WTC11 (cell line): ENCODE measurements at regions of chr5 and their contacts with region 1.

Region 1: DNA sequence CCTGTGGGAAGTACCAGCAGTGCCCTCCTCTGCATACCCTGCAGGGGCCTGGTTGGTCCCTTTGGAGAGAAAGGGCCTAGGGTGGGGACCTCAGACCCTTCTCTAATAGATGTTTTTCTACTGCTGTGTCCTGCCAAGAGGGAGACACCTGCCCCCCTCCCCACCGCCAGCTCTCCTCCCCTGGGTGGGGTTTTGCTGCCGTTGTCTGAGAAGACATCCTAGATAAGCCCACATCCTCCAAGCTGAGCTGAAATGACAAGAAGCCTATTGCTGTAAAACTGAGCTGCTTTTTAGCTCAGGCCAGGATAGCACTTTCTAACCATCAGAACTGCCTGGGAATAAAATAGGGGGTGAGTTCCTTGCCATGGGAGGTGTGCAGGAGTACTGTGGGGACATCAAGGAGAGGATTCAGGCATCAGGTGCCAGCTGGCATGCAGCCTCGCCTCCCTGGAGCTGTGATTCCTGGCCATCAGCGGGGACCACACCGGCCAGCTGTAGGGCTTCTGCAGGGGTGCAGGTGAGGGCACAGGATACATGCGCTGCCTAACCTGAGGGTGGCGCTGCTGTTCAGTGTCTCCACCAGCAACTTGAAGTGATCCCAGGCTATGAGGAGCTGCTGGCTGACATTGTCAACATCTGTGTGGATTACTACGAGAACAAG is 37.9 kb downstream of the CYFIP2 start:
- DNase-seq: peak; percentile 85
- ATAC-seq: peak; percentile 99
- H3K4me3 Mint-ChIP-seq: no peak overlapping the region
- H3K27ac Mint-ChIP-seq: no peak overlapping the region
- H3K4me1 Mint-ChIP-seq: no peaks in the 10 kb centered on the region
- H3K27me3 Mint-ChIP-seq: no peaks in the 10 kb centered on the region
- CTCF ChIP-seq: peak; percentile 65

Region 2: GRCh38 chr5:157253547-157253946 is 50.2 kb before region 1 on chr5:
- CTCF ChIA-PET with region 1: interaction called, 26 read pairs
- POLR2A ChIA-PET with region 1: interaction called, 3 read pairs
- DNase-seq: peak; percentile 71
- ATAC-seq: peak; percentile 97
- H3K4me3 Mint-ChIP-seq: no peak overlapping the region
- H3K27ac Mint-ChIP-seq: no peak overlapping the region
- H3K4me1 Mint-ChIP-seq: peaks cover 4% of the 10 kb centered on the region; the same call in 1 of the 2 replicates
- H3K27me3 Mint-ChIP-seq: no peaks in the 10 kb centered on the region
- CTCF ChIP-seq: peak; percentile 75

Region 3: GRCh38 chr5:157271740-157272271 is 32.0 kb before region 1 on chr5:
- CTCF ChIA-PET with region 1: interaction called, 16 read pairs
- POLR2A ChIA-PET with region 1: no interaction called
- DNase-seq: no peak
- ATAC-seq: no peak
- H3K4me3 Mint-ChIP-seq: no peak overlapping the region
- H3K27ac Mint-ChIP-seq: 0 out of 2 replicates have a peak overlapping the region, but pooled peaks have one; percentile 18
- H3K4me1 Mint-ChIP-seq: peaks cover 46% of the 10 kb centered on the region
- H3K27me3 Mint-ChIP-seq: no peaks in the 10 kb centered on the region
- CTCF ChIP-seq: no peak

Region 4: GRCh38 chr5:157328277-157328912 is 24.6 kb after region 1 on chr5:
- CTCF ChIA-PET with region 1: interaction called, 24 read pairs
- POLR2A ChIA-PET with region 1: no interaction called
- DNase-seq: peak; percentile 45
- ATAC-seq: peak; percentile 98
- H3K4me3 Mint-ChIP-seq: no peak overlapping the region
- H3K27ac Mint-ChIP-seq: no peak overlapping the region
- H3K4me1 Mint-ChIP-seq: no peaks in the 10 kb centered on the region
- H3K27me3 Mint-ChIP-seq: no peaks in the 10 kb centered on the region
- CTCF ChIP-seq: peak; percentile 76

Region 5: GRCh38 chr5:157471709-157472108 is 167.9 kb after region 1 on chr5:
- CTCF ChIA-PET with region 1: interaction called, 15 read pairs
- POLR2A ChIA-PET with region 1: no interaction called
- DNase-seq: peak; percentile 50
- ATAC-seq: peak; percentile 90
- H3K4me3 Mint-ChIP-seq: no peak overlapping the region
- H3K27ac Mint-ChIP-seq: no peak overlapping the region
- H3K4me1 Mint-ChIP-seq: no peaks in the 10 kb centered on the region
- H3K27me3 Mint-ChIP-seq: no peaks in the 10 kb centered on the region
- CTCF ChIP-seq: no peak; the same call in 1 of the 2 replicates